ENCODE measurements at regions of chr14 and their contacts with region 1.

Region 1: GRCh38 chr14:67837011-67837624 is 17.5 kb downstream of the RAD51B start:
- DNase-seq: peak; percentile 82
- H3K4me3 ChIP-seq: no peak overlapping the region
- H3K27ac ChIP-seq: no peak overlapping the region
- H3K4me1 ChIP-seq: no peaks in the 10 kb centered on the region
- H3K27me3 ChIP-seq: no peaks in the 10 kb centered on the region
- CTCF ChIP-seq: peak; percentile 40 to 49
- POLR2A ChIP-seq: no peak

Region 2: GRCh38 chr14:67883717-67884116 is 46.6 kb after region 1 on chr14:
- CTCF ChIA-PET with region 1: interaction called, 4 read pairs
- POLR2A ChIA-PET with region 1: no interaction called
- dilution Hi-C with region 1: no loop called
- intact Hi-C with region 1: loop called (anchors 1 kb)
- DNase-seq: peak; percentile 44
- H3K4me3 ChIP-seq: no peak overlapping the region
- H3K27ac ChIP-seq: no peak overlapping the region
- H3K4me1 ChIP-seq: peaks cover 5% of the 10 kb centered on the region
- H3K27me3 ChIP-seq: no peaks in the 10 kb centered on the region
- CTCF ChIP-seq: no peak
- POLR2A ChIP-seq: no peak

Region 3: DNA sequence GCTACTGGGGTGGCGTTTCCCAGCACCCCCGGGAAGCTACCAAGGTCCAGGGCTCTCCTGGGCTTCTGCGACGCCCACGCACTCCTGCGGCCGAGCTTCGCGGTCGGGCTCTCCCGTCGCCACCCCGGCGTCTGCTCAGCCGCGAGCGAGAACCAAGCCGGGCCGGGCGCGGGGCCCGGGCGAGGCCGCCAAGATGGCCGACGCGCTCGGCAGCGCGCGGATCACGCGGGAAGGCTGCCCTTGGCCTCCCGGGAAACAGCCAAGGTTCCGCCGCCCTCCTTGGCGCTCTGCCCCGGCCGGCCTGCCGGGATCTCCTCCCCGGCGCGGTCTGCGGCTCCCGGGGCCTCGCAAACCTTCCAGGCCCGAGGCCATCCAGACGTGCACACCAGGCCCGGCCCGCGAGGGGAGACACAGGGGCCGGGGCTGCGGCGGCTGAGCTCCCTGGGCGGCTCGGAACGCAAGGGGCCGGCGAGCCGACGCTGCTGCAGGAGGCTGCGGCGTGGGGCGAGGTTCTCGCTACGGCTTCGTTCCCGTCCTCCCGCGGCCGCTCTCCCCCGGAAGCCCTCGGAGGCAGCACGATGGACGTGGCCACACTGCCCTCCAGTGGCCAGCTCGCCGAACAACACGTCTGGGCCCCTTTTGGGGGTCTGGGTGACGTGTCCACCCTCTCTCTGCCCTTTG is 979.3 kb after region 1 on chr14:
- CTCF ChIA-PET with region 1: interaction called, 4 read pairs
- POLR2A ChIA-PET with region 1: no interaction called
- dilution Hi-C with region 1: no loop called
- intact Hi-C with region 1: loop called (anchors 2 kb)
- DNase-seq: peak; percentile 89
- H3K4me3 ChIP-seq: peak overlapping the region in 1 of 3 experiments; percentile 24
- H3K27ac ChIP-seq: peak overlapping the region; percentile 71
- H3K4me1 ChIP-seq: peaks cover 21% of the 10 kb centered on the region
- H3K27me3 ChIP-seq: no peaks in the 10 kb centered on the region
- CTCF ChIP-seq: peak; percentile 95
- POLR2A ChIP-seq: peak; percentile 46

Region 4: GRCh38 chr14:68824517-68825347 is 987.6 kb after region 1 on chr14:
- CTCF ChIA-PET with region 1: interaction called, 6 read pairs
- POLR2A ChIA-PET with region 1: no interaction called
- dilution Hi-C with region 1: no loop called
- intact Hi-C with region 1: loop called (anchors 2 kb)
- DNase-seq: peak; percentile 66
- H3K4me3 ChIP-seq: no peak overlapping the region
- H3K27ac ChIP-seq: no peak overlapping the region
- H3K4me1 ChIP-seq: no peaks in the 10 kb centered on the region
- H3K27me3 ChIP-seq: no peaks in the 10 kb centered on the region
- CTCF ChIP-seq: peak; percentile 92 to 95
- POLR2A ChIP-seq: no peak

Region 5: GRCh38 chr14:68843471-68844209 is 1006.5 kb after region 1 on chr14:
- CTCF ChIA-PET with region 1: interaction called, 15 read pairs
- POLR2A ChIA-PET with region 1: no interaction called
- dilution Hi-C with region 1: no loop called
- intact Hi-C with region 1: loop called (anchors 1 kb)
- DNase-seq: peak; percentile 75
- H3K4me3 ChIP-seq: no peak overlapping the region
- H3K27ac ChIP-seq: no peak overlapping the region
- H3K4me1 ChIP-seq: peaks cover 14% of the 10 kb centered on the region
- H3K27me3 ChIP-seq: no peaks in the 10 kb centered on the region
- CTCF ChIP-seq: peak; percentile 92 to 95
- POLR2A ChIP-seq: no peak

Measured in endothelial cell of umbilical vein (primary cell).